Natural killer cell (primary cell): ENCODE measurements at regions of chr17 and their contacts with region 1.

Region 1: DNA sequence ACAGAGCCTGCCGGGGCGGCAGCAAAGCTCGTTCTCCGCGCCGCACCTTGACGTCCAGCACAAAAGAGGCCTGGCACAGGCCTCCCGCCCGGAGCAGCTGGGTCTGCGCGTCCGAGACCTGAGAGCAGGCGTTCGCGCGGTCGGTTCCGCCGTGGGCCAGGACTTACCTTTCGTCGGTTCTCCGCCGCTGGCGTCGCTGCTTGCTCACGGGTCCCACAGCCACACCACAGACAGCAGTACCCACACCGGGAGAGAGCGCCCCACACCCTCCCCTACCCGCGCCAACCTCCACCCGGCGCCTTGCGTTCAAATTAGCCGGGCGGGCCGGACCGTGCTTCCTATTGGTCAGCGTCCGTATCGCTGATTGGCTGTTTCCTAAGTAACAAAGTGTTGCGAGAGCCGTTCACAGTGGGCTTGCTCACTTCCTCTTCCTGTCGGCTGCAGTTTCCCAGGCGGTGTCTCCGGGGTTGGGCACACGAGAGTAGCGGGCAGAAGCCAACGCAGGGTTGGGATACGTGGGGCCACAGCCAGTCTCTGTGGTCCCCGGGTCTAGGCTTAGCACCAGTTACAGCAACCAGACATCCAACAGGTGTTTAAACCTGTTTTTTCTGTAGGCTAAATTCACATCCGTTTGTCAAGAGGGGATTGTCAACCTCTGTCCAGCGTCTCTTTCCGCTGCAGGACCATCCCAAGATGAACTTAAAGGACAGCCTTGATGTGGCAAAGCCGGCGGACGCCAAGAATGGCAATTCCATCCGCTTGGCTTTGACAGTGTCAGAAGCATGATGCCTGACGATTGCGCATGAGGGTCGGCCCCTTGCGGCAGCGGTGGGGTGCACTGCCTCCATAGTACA is at the start of gene KIF18B:
- DNase-seq: peak; percentile 86 to 94
- ATAC-seq: peak; percentile 97 to 99 (median 98)
- H3K4me3 ChIP-seq: peak within 1 kb of the TSS; percentile 62
- H3K4me3 Mint-ChIP-seq: peak within 1 kb of the TSS; percentile 92
- H3K27ac ChIP-seq: peak within 1 kb of the TSS; percentile 69
- H3K27ac Mint-ChIP-seq: peak within 1 kb of the TSS; percentile 91
- H3K4me1 ChIP-seq: peaks cover 13% of the 10 kb centered on the region
- H3K4me1 Mint-ChIP-seq: peaks cover 6 to 8% of the 10 kb centered on the region in 2 donors
- H3K27me3 ChIP-seq: peaks cover 2% of the 10 kb centered on the region
- H3K27me3 Mint-ChIP-seq: no peaks in the 10 kb centered on the region
- CTCF ChIP-seq: no peak
- total RNA-seq, gene KIF18B: 0.53 to 1.3 (median 1.1) TPM

Region 2: DNA sequence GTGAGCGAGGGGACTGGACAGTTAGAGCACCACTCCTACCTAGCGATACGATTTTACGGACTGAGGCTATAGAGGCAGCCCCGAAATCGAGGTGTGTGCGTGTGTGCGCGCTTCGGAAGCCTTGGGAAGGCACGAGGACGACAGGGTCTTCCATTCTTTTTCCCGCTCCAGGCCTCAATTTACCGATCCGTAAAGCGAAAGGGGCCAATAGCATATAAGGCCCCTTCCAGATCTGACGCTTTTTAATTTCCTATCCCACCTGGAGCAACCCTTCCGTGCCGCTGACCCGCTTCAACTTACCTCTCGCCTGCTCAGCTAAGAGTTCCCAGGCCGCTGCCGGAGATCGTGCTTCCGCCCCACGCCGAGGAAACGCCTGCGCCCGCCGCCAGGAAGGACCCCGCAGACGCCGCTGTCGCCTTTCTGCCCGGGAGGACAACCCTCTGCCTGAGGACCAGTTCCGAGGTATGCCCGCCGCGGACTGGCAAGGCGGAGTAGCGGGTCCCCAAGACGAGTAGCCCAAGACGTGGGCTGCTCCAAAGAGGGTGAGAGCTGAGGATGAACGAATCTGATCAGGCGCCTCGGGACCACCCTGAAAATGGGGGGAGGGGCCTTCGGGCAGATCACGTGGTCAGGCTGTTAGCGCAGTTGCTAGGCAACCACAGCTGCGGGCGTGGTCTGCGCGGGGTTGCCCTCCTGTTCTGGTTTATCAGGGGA is 48.5 kb before region 1 on chr17 and contains the start of gene EFTUD2:
- intact Hi-C with region 1: loop called (anchors 1 kb)
- DNase-seq: peak; percentile 94 to 97
- ATAC-seq: peak; percentile 93 to 95 (median 94)
- H3K4me3 ChIP-seq: peak within 1 kb of the TSS; percentile 97
- H3K4me3 Mint-ChIP-seq: peak within 1 kb of the TSS; percentile 92
- H3K27ac ChIP-seq: peak within 1 kb of the TSS; percentile 99
- H3K27ac Mint-ChIP-seq: peak within 1 kb of the TSS; percentile 99
- H3K4me1 ChIP-seq: peaks cover 20% of the 10 kb centered on the region
- H3K4me1 Mint-ChIP-seq: peaks cover 16 to 32% of the 10 kb centered on the region in 2 donors
- H3K27me3 ChIP-seq: no peaks in the 10 kb centered on the region
- H3K27me3 Mint-ChIP-seq: peaks cover 3 to 11% of the 10 kb centered on the region in 2 donors
- CTCF ChIP-seq: no peak
- total RNA-seq, gene EFTUD2: 135 to 178 (median 164) TPM

Region 3: GRCh38 chr17:45051060-45051719 is 103.5 kb after region 1 on chr17 and contains the start of gene DCAKD:
- intact Hi-C with region 1: loop called (anchors 5 kb)
- DNase-seq: peak; percentile 83 to 95
- ATAC-seq: peak; percentile 96 to 98 (median 97)
- H3K4me3 ChIP-seq: peak within 1 kb of the TSS; percentile 78
- H3K4me3 Mint-ChIP-seq: peak within 1 kb of the TSS; percentile 89
- H3K27ac ChIP-seq: peak within 1 kb of the TSS; percentile 93
- H3K27ac Mint-ChIP-seq: peak within 1 kb of the TSS; percentile 93 to 97
- H3K4me1 ChIP-seq: peaks cover 30% of the 10 kb centered on the region
- H3K4me1 Mint-ChIP-seq: peaks cover 22 to 24% of the 10 kb centered on the region in 2 donors
- H3K27me3 ChIP-seq: no peaks in the 10 kb centered on the region
- H3K27me3 Mint-ChIP-seq: no peaks in the 10 kb centered on the region
- CTCF ChIP-seq: no peak
- total RNA-seq, gene DCAKD: 15.4 to 21.4 (median 21.1) TPM